CD8-positive, alpha-beta memory T cell (primary cell): ENCODE measurements at regions of chr6 and their contacts with region 1.

Region 1: GRCh38 chr6:110366256-110366655 is 8.1 kb upstream of the METTL24 start:
- DNase-seq: peak in 1 of 5 donors; percentile 30
- H3K4me3 ChIP-seq: no peak overlapping the region
- H3K4me3 Mint-ChIP-seq: peak overlapping the region in 6 of 7 donors; percentile 14 to 62 (median 44)
- H3K27ac ChIP-seq: no peak overlapping the region
- H3K27ac Mint-ChIP-seq: peak overlapping the region; percentile 18 to 84 (median 62)
- H3K4me1 ChIP-seq: peaks cover 24% of the 10 kb centered on the region
- H3K4me1 Mint-ChIP-seq: peaks cover 19 to 44% (median 37%) of the 10 kb centered on the region in 3 donors
- H3K27me3 ChIP-seq: no peaks in the 10 kb centered on the region
- H3K27me3 Mint-ChIP-seq: peaks cover 4 to 21% of the 10 kb centered on the region in 2 donors

Region 2: DNA sequence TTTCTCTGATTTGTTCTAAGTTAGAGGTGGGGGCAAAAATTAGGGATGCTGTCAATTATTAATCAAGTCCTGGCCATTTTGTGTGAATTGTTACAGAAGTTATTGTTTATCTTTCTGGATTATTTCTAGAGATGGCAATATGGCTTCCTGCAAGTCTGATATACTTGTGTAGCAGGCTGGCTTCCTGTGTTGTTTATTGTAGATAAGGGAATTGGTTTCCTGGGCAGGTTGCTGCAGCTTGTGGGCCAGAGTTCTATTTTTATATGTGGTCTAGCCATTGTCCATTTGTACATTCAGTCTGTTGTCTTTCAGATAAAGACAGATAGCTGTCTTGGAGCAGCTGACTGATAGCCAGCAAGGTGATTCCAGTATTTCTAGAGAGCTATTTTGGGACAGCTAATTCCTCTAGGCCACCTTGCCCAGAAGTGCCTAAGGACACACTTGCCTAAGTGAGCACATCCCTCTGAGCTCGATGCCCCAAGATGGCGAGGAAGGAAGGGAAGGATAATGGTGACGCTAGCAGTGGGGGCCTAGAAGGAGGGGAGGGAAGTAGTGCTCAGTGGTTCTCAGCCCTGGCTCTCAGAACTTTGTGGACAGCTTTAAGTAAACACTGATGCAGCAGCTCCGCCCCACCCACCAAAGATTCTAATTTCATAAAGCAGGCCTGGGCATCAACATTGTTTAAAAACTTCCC is 23.6 kb after region 1 on chr6:
- CTCF ChIA-PET with region 1: interaction called, 16 read pairs
- POLR2A ChIA-PET with region 1: interaction called, 6 read pairs
- DNase-seq: no peak
- H3K4me3 ChIP-seq: no peak overlapping the region
- H3K4me3 Mint-ChIP-seq: peak overlapping the region in 2 of 7 donors; percentile 49 to 50
- H3K27ac ChIP-seq: no peak overlapping the region
- H3K27ac Mint-ChIP-seq: peak overlapping the region in 7 of 8 donors; percentile 21 to 82 (median 54)
- H3K4me1 ChIP-seq: peaks cover 11% of the 10 kb centered on the region
- H3K4me1 Mint-ChIP-seq: peaks cover 16 to 23% (median 18%) of the 10 kb centered on the region in 3 donors
- H3K27me3 ChIP-seq: no peaks in the 10 kb centered on the region
- H3K27me3 Mint-ChIP-seq: peaks cover 0 to 1% of the 10 kb centered on the region in 2 donors

Region 3: DNA sequence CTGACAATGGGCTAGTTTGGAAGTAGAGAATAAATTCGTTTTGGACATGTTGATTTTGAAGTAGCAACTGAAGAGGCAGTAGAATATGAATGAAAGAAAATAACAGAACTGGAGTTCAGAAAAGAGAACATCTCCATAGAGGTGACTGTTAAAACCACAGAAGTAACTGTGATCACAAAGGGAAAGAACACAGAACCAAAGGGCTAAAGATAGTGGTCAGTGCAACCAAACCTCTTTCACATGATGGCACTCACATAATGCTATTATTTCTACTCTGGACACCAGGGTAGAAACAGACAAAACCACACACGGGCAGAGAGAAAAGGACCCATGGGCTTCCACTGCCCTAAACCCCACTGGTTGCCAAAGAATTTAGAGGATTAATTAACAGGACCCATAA is 390.6 kb after region 1 on chr6:
- CTCF ChIA-PET with region 1: no interaction called
- POLR2A ChIA-PET with region 1: no interaction called
- DNase-seq: no peak
- H3K4me3 ChIP-seq: no peak overlapping the region
- H3K4me3 Mint-ChIP-seq: no peak overlapping the region
- H3K27ac ChIP-seq: no peak overlapping the region
- H3K27ac Mint-ChIP-seq: no peak overlapping the region
- H3K4me1 ChIP-seq: no peaks in the 10 kb centered on the region
- H3K4me1 Mint-ChIP-seq: peaks cover 6 to 17% (median 9%) of the 10 kb centered on the region in 3 donors
- H3K27me3 ChIP-seq: no peaks in the 10 kb centered on the region
- H3K27me3 Mint-ChIP-seq: no peaks in the 10 kb centered on the region